Calu3 (cell line): ENCODE measurements at regions of chr3 and their contacts with region 1.

Region 1: DNA sequence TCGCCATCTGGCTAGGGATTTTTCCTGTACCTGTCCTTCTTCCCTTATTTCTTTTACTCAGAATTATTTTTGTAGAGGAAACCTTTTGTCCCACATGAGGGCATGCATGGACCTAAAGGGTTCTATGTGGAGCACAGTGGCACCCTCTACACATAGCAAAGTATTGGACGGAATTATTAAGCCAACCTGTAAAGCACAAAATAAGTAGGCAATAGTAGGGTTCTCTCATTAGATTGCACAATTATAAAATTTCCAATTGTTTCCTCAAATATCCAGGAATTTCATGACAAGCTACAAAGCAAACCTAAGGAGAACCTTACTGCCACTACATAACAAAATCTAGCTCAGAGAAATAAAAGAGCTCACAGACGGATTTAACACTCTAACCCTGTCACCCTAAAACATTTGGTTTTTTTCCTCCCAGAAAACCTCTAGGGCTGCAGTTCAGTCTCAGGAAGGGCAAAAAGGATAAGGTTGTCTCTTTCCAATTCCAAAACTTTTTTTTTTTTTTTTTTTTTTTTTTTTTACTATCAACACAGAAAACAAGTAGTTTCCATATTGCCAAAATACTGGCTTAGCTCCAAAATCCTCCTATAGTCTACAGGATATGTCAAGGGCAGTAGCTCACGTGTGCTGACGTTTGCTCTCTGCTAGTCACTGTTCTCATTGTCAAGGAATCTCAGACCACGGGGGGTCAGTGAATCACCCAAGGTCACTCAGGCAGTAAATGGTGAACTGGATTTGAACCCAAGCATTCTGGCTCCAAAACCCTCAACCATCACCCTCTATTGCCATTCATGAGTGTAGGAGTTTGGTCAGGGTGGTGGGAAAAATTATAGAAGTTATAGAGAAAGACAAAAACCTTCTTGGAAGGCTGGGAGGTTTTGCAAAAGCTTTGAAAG is 52.3 kb downstream of the NCEH1 start:
- DNase-seq: peak; percentile 83
- H3K4me3 Mint-ChIP-seq: peak overlapping the region; percentile 33
- H3K27ac Mint-ChIP-seq: no peak overlapping the region
- H3K4me1 Mint-ChIP-seq: peaks cover 13% of the 10 kb centered on the region
- H3K27me3 Mint-ChIP-seq: no peaks in the 10 kb centered on the region
- CTCF ChIP-seq: no peak

Region 2: DNA sequence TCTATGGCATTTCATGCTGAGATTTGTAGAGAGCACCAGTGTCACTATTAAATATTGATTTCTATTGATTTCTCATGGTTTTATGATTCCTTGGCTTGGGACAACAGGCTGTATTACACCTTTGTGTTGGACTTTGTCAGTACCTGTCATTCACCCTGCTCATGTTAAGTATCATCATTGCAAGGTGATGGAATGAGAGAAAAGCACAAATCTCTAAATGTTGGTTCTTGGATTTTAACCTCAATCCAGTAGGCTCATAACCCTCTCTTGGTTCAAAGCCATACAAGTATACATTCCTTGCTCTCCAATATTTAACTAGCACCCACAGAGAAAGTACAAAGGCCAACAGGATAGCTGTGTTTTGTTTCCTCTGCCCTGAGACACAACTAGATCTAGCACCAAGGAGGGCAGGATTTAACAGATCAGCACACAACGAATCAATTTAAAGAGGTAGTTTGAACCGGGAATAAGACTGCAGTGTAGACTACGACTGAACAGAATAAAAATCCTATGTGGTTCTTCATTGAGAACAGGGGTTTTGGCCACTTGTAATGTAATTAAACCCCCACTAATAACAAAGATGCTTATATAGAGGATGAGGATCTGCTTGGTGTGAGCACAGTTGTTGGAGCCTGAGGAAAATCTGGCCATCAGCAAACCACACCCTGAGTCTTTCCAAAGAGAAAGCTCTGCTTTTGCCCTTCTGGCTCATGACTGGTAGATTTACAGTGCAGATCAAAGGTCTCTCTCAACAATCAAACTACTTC is 57.3 kb before region 1 on chr3:
- CTCF ChIA-PET with region 1: interaction called, 9 read pairs
- intact Hi-C with region 1: loop called (anchors 1 kb)
- DNase-seq: peak; percentile 40
- H3K4me3 Mint-ChIP-seq: peak overlapping the region; percentile 48
- H3K27ac Mint-ChIP-seq: peak overlapping the region; percentile 52
- H3K4me1 Mint-ChIP-seq: peaks cover 58% of the 10 kb centered on the region
- H3K27me3 Mint-ChIP-seq: no peaks in the 10 kb centered on the region
- CTCF ChIP-seq: no peak

Region 3: DNA sequence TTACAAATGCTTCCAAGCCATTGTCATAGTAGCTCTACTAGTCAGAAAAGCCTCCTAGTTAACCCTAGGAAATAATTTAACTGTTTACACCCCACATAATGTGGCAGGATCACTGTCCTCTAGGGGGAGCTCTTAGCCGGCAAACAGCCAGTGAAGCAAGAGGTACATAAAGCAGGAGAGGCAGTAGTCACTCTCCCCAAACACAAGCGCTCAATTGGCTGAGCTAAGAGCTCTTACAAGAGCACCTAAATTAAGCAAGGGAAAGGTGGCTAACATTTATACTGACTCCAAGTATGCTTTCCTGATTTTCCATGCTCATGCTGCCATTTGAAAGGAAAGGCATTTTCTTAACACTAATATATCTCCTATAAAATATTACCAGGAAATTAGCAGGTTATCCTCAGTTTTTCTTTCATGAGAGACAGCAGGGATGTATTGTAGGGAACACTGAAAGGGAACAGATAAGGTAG is 14.7 kb after region 1 on chr3:
- CTCF ChIA-PET with region 1: interaction called, 10 read pairs
- intact Hi-C with region 1: no loop called
- DNase-seq: peak; percentile 93
- H3K4me3 Mint-ChIP-seq: no peak overlapping the region
- H3K27ac Mint-ChIP-seq: peak overlapping the region; percentile 41
- H3K4me1 Mint-ChIP-seq: peaks cover 34% of the 10 kb centered on the region
- H3K27me3 Mint-ChIP-seq: no peaks in the 10 kb centered on the region
- CTCF ChIP-seq: peak; percentile 99

Region 4: DNA sequence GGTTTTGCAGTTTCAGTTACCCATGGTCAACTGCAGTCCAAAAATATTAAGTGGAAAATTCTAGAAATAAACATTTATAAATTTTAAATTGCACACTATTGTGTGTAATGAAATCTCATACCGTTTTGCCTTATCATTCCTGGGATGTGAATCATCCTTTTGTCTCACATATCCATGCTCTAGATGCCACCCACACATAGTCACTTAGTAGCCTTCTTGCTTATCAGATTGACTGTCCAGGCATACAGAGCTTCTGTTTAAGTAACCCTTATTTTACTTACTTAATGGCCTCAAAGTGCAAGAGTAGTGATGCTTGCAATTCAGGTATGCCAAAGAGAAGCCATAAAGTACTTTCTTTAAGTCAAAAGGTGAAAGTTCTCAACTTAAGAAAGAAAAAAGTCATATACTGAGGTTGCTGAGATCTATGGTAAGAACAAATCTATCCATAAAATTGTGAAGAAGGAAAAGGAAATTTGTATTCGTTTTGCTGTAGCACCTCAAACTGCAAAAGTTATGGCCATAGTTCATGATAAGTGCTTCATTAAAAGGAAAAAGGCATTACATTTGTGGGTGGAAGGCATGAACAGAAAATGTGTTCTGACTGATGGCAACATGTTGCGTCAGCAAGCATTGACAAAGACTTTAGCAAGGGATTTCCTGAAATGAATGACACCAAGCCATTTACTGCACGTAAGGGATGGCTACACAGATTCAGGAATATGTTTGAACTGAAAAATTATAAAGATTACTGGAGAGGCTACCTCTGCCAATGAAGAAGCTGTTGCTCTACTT is 438.6 kb after region 1 on chr3:
- CTCF ChIA-PET with region 1: no interaction called
- intact Hi-C with region 1: no loop called
- DNase-seq: no peak
- H3K4me3 Mint-ChIP-seq: no peak overlapping the region
- H3K27ac Mint-ChIP-seq: no peak overlapping the region
- H3K4me1 Mint-ChIP-seq: no peaks in the 10 kb centered on the region
- H3K27me3 Mint-ChIP-seq: peaks cover 6% of the 10 kb centered on the region
- CTCF ChIP-seq: no peak